HEK293 (cell line): ENCODE measurements at regions of chr14 and their contacts with region 1.

Region 1: GRCh38 chr14:75709207-75709812 is 48.3 kb downstream of the TTLL5 start:
- H3K4me3 ChIP-seq: no peak overlapping the region
- H3K27ac ChIP-seq: no peak overlapping the region
- H3K4me1 ChIP-seq: peaks cover 10% of the 10 kb centered on the region
- CTCF ChIP-seq: no peak

Region 2: DNA sequence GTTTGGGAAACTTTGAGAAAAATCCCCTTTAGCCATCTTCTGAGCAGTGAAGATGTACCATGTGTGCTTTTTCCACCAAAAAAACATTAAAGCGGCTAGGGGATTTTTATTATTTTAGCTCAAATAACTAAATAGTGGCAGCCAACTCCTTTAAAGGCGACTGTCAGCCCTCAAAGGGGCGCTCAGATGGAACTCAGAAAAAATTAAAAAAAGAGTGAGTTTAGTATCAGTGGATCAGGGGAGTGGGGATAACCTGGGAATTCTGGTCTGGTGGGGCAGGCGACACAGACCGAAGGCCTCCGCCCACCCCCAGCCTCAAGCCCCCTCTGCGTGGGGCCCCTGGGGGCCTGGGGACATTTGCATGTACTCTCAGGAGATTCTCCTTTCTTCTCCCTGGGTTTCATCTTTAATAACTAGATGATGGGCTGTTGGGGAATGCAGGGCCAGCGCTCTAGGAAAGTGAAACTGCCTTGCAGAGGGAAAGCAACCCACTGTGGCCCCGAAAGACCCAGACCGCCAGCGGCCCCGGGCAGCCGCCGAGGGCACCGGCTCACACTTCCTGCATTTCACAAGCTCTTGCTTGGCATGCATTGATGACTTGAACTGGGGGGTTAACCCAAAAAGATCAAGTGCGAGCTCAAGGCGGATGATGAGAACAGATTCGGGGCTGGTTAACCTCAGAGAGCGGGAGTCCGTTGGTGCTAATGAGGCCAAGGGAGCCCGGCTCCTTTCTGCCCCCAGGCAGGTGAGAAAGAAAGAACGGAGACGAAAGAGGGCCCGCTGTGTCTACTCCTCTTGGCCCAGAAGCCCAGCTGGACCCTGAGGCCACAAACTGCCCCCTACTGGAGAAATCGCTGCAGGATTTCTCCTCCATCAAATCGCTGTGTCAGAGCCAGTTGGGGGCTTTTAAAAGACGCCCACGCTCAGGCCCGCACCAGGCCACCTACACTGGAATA is 194.4 kb before region 1 on chr14:
- CTCF ChIA-PET with region 1: no interaction called
- POLR2A ChIA-PET with region 1: no interaction called
- H3K4me3 ChIP-seq: no peak overlapping the region
- H3K27ac ChIP-seq: no peak overlapping the region
- H3K4me1 ChIP-seq: no peaks in the 10 kb centered on the region
- CTCF ChIP-seq: no peak

Region 3: DNA sequence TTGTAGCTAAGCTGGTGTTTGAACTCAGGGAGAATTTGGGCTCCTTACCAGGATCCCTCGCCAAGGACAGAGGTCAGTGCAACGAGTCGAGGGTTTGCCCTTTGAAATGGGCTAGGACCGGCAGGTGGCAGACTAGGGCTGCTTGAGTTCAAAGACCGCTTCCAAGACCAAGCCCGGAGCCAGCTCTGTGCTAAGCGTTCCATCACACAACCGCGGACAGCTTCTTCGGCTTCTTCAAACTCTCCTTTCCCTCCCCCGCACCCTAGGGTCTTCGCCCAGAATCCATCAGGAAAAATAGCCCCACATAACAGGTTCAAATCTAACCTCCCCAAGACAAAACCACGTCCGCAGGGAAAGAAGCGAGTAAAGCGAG is 131.6 kb before region 1 on chr14:
- CTCF ChIA-PET with region 1: interaction called, 13 read pairs
- POLR2A ChIA-PET with region 1: no interaction called
- H3K4me3 ChIP-seq: peak overlapping the region; percentile 49
- H3K27ac ChIP-seq: no peak overlapping the region; the same call in 1 of the 2 replicates
- H3K4me1 ChIP-seq: peaks cover 4% of the 10 kb centered on the region; the same call in 1 of the 2 replicates
- CTCF ChIP-seq: peak; percentile 52

Region 4: DNA sequence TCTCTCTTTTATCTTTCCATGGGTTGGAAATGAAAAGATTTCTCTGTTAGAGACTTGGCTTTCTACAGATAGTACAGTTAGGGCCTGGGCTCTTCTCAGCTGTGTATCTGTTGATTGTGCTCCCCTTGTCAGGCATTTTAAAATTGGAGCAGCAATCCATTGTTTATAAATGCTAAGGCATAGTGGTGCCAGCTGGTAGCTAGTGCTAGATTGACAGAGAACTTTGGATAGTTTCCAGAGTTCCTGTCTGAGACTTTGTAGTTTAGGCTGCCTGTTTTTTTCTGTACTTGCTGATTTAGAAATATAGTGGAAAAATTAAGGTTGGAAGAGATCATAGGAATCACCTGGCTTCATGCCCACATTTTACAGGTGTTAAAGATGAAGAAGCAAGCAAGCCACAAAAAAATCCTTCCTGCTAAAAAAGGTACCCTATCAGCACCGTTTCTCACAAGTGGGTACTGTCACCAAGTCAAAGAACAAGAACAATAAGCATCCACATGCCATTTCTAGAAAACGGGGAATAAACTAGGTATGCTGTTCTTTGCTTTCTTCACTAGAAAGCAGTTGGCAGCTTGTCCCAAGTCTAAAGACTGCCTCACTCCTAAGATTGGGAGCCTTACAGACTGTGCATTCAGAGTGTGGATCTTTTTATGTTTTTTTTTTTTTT is 42.1 kb before region 1 on chr14:
- CTCF ChIA-PET with region 1: no interaction called
- POLR2A ChIA-PET with region 1: no interaction called
- H3K4me3 ChIP-seq: no peak overlapping the region
- H3K27ac ChIP-seq: no peak overlapping the region
- H3K4me1 ChIP-seq: no peaks in the 10 kb centered on the region; the same call in 1 of the 2 replicates
- CTCF ChIP-seq: no peak

Region 5: DNA sequence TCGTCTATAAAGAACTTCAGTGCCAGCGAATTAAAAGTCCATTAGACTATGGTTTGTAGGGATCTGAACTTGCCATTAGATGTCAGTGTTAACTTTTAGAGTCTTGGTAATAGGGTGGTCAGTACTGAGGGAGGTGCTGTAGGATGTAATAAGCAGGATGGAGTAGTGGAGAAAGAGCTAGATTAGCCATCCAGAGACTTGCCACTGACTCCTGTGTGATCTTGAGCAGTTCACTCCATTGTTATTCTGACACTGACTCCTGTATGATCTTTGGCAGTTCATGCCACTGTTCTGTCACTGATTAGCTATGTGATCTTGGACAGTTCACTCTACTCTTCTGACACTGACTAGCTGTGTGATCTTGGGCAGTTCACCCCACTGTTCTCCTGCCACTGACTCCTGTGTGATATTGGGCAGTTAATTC is 85.3 kb after region 1 on chr14:
- CTCF ChIA-PET with region 1: interaction called, 20 read pairs
- POLR2A ChIA-PET with region 1: no interaction called
- H3K4me3 ChIP-seq: no peak overlapping the region
- H3K27ac ChIP-seq: no peak overlapping the region
- H3K4me1 ChIP-seq: no peaks in the 10 kb centered on the region
- CTCF ChIP-seq: peak; percentile 70

Region 6: DNA sequence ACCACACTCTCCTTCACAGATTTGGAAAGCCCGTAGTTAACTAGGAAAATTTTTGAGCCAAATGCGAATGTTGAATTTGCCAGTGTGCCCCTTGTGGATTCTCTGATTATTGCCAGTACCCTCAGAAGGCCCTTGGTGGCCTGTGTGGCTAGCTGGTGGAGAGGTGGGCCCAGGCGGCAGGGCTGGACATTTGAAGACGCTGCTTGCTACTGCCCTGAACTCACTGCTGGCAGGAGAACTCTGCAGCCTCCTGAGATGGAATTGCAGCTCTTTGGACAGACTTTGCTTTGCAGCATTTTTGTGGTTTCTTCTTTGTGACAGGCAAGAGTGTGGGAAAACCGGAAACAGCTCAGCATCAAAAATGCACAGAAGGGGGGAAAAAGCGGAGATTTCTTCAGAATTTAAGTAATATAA is 174.9 kb after region 1 on chr14:
- CTCF ChIA-PET with region 1: interaction called, 13 read pairs
- POLR2A ChIA-PET with region 1: no interaction called
- H3K4me3 ChIP-seq: no peak overlapping the region
- H3K27ac ChIP-seq: no peak overlapping the region
- H3K4me1 ChIP-seq: no peaks in the 10 kb centered on the region
- CTCF ChIP-seq: no peak

Region 7: DNA sequence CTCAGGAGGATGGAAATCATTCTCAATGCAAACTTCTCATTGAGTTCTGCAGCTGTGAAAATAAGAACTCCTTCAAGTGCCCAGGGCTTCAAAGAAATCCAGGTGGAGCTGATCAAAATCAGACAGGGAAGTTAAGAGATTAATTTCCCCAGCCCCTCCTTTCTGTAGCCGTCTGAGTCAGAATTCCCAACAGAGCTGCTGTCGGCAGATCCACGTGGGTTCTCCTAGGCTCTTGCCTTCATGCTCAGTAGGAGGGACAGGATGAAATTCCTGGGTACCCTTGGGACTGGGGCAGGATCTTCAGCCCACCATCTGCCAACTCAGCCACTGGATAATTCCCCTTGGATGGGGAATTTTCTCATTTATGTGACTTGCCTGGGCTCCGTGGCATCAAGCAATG is 259.1 kb after region 1 on chr14:
- CTCF ChIA-PET with region 1: interaction called, 13 read pairs
- POLR2A ChIA-PET with region 1: no interaction called
- H3K4me3 ChIP-seq: no peak overlapping the region
- H3K27ac ChIP-seq: no peak overlapping the region
- H3K4me1 ChIP-seq: no peaks in the 10 kb centered on the region
- CTCF ChIP-seq: no peak

Region 8: DNA sequence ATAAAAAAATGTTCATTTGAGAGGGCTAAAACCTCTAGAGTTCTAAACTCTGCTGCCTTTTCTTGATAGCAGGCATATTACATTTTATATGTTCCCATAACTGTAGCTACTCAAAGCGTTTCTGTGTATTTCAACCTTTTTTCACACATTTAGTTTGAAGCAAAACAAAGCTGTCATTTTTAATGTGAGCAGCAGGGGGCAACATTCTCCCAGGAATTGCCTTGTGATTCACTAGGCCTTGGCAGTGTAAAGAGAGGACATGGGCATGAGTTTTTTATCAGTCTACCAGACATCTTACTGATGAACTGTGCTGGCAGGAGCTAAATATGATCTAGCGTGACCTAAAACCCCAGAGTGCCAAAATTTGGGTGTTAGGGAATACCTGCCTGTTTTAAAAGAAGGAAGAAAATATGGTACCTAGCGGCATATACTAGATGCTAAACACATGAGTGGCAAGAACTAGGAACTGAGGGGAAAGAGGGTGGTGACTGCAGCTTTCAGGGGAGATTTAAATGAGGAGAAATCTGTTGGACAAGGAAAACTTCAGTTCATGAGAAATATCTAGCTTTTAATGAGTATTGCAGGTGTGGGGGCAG is 341.6 kb after region 1 on chr14:
- CTCF ChIA-PET with region 1: interaction called, 28 read pairs
- POLR2A ChIA-PET with region 1: no interaction called
- H3K4me3 ChIP-seq: no peak overlapping the region
- H3K27ac ChIP-seq: no peak overlapping the region
- H3K4me1 ChIP-seq: no peaks in the 10 kb centered on the region
- CTCF ChIP-seq: no peak

Region 9: GRCh38 chr14:76647697-76648298 is 938.5 kb after region 1 on chr14:
- CTCF ChIA-PET with region 1: interaction called, 28 read pairs
- POLR2A ChIA-PET with region 1: no interaction called
- H3K4me3 ChIP-seq: no peak overlapping the region
- H3K27ac ChIP-seq: no peak overlapping the region
- H3K4me1 ChIP-seq: no peaks in the 10 kb centered on the region
- CTCF ChIP-seq: no peak